CD14-positive monocyte (primary cell): ENCODE measurements at regions of chr11 and their contacts with region 1.

Region 1: DNA sequence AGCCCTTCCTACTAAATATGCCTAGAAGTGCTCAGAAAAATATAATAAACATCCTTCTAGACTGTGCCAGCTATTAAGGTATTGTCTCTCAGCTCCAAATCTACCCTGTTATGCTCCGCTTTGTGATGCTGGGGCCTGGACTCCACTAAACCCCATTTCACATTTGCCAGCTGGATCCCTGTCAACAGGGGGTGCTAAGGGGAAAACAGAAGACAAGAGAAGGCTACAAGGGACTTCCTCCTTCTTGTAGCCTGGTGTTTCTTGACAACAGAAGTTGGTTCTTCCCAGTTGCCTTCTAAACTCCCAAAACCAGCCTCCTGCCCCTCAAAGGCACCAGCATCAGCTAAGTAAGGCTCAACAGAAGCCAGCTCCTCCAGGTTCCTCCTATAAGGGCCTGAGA is 5.2 kb downstream of the NUMA1 start:
- DNase-seq: peak; percentile 64 to 71 (median 65)
- H3K4me3 ChIP-seq: peak overlapping the region in 2 of 3 experiments; percentile 0 to 61
- H3K4me3 Mint-ChIP-seq: peak overlapping the region; percentile 68 to 88
- H3K27ac ChIP-seq: peak overlapping the region; percentile 43 to 86
- H3K27ac Mint-ChIP-seq: peak overlapping the region; percentile 91 to 98 (median 96)
- H3K4me1 ChIP-seq: peaks cover 42 to 74% of the 10 kb centered on the region in 2 donors
- H3K4me1 Mint-ChIP-seq: peaks cover 56% of the 10 kb centered on the region
- H3K27me3 ChIP-seq: no peaks in the 10 kb centered on the region
- H3K27me3 Mint-ChIP-seq: no peaks in the 10 kb centered on the region
- CTCF ChIP-seq: peak; percentile 67

Region 2: GRCh38 chr11:72040726-72041441 is 34.2 kb before region 1 on chr11:
- intact Hi-C with region 1: loop called in 1 of 2 experiments (anchors 5 kb)
- DNase-seq: peak; percentile 64 to 80 (median 73)
- H3K4me3 ChIP-seq: peak overlapping the region; percentile 68 to 94 (median 89)
- H3K4me3 Mint-ChIP-seq: no peak overlapping the region
- H3K27ac ChIP-seq: peak overlapping the region; percentile 82 to 95
- H3K27ac Mint-ChIP-seq: no peak overlapping the region
- H3K4me1 ChIP-seq: peaks cover 33 to 42% of the 10 kb centered on the region in 2 donors
- H3K4me1 Mint-ChIP-seq: peaks cover 6% of the 10 kb centered on the region
- H3K27me3 ChIP-seq: no peaks in the 10 kb centered on the region
- H3K27me3 Mint-ChIP-seq: no peaks in the 10 kb centered on the region
- CTCF ChIP-seq: no peak